CD14-positive monocyte (primary cell): ENCODE measurements at regions of chr12 and their contacts with region 1.

Region 1: GRCh38 chr12:76158518-76159321 is 74.2 kb upstream of the NAP1L1 start:
- DNase-seq: peak; percentile 92 to 97 (median 95)
- H3K4me3 ChIP-seq: peak overlapping the region; percentile 24 to 69 (median 66)
- H3K4me3 Mint-ChIP-seq: peak overlapping the region; percentile 78 to 89
- H3K27ac ChIP-seq: peak overlapping the region; percentile 63 to 82
- H3K27ac Mint-ChIP-seq: peak overlapping the region; percentile 81 to 97 (median 89)
- H3K4me1 ChIP-seq: peaks cover 44% of the 10 kb centered on the region in 2 donors
- H3K4me1 Mint-ChIP-seq: peaks cover 43% of the 10 kb centered on the region
- H3K27me3 ChIP-seq: no peaks in the 10 kb centered on the region
- H3K27me3 Mint-ChIP-seq: no peaks in the 10 kb centered on the region
- CTCF ChIP-seq: peak; percentile 84

Region 2: DNA sequence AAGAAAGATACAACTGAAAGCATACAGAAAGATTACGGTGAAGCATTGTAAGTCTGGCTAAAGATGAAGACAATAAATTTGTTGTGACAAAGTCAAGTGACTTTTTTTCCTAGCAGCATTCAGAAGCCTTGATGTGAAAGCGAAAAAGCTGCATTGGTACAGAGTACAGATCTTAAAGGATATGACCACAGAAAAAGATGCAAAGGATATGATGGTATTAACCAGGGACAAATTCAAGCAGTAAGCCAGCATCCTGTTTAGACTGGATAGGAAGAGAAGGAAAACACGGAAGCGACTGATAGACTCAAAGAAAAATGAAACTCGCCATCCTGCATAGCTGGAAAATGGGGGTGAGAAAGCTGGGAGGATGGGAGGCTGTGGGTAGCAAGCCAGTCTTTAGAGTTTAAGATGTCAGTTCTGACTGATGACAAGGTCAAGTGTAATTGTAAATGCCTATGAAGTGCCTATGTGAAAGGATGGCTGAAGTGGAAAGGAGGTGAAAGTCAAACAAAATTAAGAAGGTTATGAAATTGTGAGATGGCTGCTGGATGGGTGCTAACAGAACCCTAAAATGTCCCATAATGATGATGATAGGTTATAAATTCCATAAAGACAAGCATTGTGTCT is 219.6 kb before region 1 on chr12:
- intact Hi-C with region 1: loop called in 1 of 2 experiments (anchors 5 kb)
- DNase-seq: no peak
- H3K4me3 ChIP-seq: no peak overlapping the region
- H3K4me3 Mint-ChIP-seq: no peak overlapping the region
- H3K27ac ChIP-seq: no peak overlapping the region
- H3K27ac Mint-ChIP-seq: no peak overlapping the region
- H3K4me1 ChIP-seq: peaks cover 10 to 14% of the 10 kb centered on the region in 2 donors
- H3K4me1 Mint-ChIP-seq: peaks cover 12% of the 10 kb centered on the region
- H3K27me3 ChIP-seq: peaks cover 18% of the 10 kb centered on the region in 2 donors
- H3K27me3 Mint-ChIP-seq: peaks cover 3 to 10% (median 7%) of the 10 kb centered on the region in 3 donors
- CTCF ChIP-seq: no peak

Region 3: DNA sequence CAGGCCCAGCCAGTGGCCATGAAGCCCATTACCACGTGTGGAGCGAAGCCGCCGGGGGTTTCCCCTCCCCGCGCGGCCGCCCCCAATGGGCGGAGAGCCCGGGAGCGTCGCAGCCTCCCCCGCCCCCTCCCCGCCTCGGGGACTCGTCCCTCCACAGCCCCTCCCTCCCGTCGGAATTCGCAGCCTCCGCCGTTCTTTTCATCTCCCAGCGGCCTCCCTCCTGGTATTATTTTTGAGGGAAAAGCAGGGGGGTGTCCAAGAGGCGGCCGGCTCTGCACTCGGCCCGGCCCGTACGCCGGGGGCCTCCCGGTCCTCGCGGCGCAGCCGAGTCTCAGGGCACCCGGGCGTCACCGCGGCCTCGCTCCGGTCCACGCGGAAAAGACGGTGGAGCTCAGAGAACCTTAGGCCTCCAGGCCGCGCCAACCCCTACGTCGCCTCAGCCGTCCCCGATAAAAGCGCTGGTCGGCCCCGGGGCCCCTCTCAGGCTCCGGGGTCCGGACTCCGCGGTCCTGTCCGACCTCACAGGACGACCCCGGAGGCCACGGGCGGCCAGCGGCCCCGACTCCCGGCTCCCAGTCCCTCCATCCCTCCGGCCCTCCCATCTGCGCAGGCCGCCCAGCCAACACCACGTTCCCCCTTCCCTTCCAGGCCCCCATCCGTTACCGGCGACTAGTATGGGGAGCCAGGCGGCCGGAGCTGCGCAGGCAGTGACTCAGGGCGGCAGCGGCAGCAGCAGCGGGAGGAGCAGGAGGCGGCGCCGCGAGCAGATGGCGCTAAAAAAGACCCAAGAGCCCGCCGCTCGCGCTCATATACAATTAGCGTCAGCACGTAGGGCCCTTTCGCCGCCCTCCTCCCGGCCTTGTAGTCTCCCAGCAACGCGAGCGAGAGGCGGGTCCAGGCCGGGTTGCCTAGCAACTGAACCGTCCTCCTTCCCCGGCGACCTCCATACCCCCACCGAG is 74.5 kb before region 1 on chr12 and contains the start of gene NAP1L1:
- intact Hi-C with region 1: loop called (anchors 5 to 10 kb)
- DNase-seq: peak; percentile 93 to 96 (median 94)
- H3K4me3 ChIP-seq: peak within 1 kb of the TSS; percentile 69 to 82 (median 72)
- H3K4me3 Mint-ChIP-seq: peak within 1 kb of the TSS; percentile 92 to 93
- H3K27ac ChIP-seq: peak within 1 kb of the TSS; percentile 87 to 97
- H3K27ac Mint-ChIP-seq: peak within 1 kb of the TSS; percentile 93 to 98 (median 97)
- H3K4me1 ChIP-seq: peaks cover 24 to 36% of the 10 kb centered on the region in 2 donors
- H3K4me1 Mint-ChIP-seq: peaks cover 32% of the 10 kb centered on the region
- H3K27me3 ChIP-seq: no peaks in the 10 kb centered on the region
- H3K27me3 Mint-ChIP-seq: peaks cover 0 to 2% (median 0%) of the 10 kb centered on the region in 3 donors
- CTCF ChIP-seq: peak; percentile 8
- polyA plus RNA-seq, gene NAP1L1: 98.3 to 164 (median 111) TPM

Region 4: GRCh38 chr12:76226397-76226796 is 67.7 kb after region 1 on chr12:
- intact Hi-C with region 1: no loop called
- DNase-seq: peak in 1 of 3 donors; percentile 4
- H3K4me3 ChIP-seq: no peak overlapping the region
- H3K4me3 Mint-ChIP-seq: no peak overlapping the region
- H3K27ac ChIP-seq: no peak overlapping the region
- H3K27ac Mint-ChIP-seq: no peak overlapping the region
- H3K4me1 ChIP-seq: no peaks in the 10 kb centered on the region
- H3K4me1 Mint-ChIP-seq: peaks cover 2% of the 10 kb centered on the region
- H3K27me3 ChIP-seq: no peaks in the 10 kb centered on the region
- H3K27me3 Mint-ChIP-seq: peaks cover 0 to 3% (median 2%) of the 10 kb centered on the region in 3 donors
- CTCF ChIP-seq: no peak